ENCODE measurements at regions of chr20 and their contacts with region 1.

Region 1: GRCh38 chr20:40990542-40991120 is 38.0 kb upstream of the TOP1 start:
- DNase-seq: peak; percentile 95
- H3K4me3 ChIP-seq: no peak overlapping the region
- H3K4me3 Mint-ChIP-seq: no peak overlapping the region
- H3K27ac Mint-ChIP-seq: peak overlapping the region; percentile 62
- H3K4me1 ChIP-seq: peaks cover 12% of the 10 kb centered on the region
- H3K4me1 Mint-ChIP-seq: peaks cover 17% of the 10 kb centered on the region
- H3K27me3 ChIP-seq: no peaks in the 10 kb centered on the region
- H3K27me3 Mint-ChIP-seq: no peaks in the 10 kb centered on the region
- CTCF ChIP-seq: peak; percentile 96 to 99

Region 2: DNA sequence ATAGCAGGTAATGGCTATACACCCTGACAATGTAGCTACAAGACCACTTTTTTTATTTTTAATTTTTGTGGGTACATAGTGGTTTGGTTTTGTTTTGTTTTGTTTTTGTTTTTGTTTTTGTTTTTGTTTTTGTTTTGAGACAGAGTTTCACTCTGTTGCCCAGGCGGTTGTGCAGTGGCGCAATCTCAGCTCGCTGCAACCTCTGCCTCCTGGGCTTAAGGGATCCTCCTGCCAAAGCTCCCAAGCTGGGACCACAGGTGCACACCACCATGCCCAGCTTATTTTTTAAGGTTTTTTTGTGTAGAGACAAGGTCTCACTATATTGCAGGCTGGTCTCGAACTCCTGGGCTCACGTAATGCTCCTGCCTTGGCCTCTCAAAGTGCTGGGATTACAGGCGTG is 18.5 kb before region 1 on chr20:
- CTCF ChIA-PET with region 1: interaction called, 13 read pairs
- POLR2A ChIA-PET with region 1: no interaction called
- intact Hi-C with region 1: loop called (anchors 1 kb)
- DNase-seq: no peak
- H3K4me3 ChIP-seq: no peak overlapping the region
- H3K4me3 Mint-ChIP-seq: no peak overlapping the region
- H3K27ac Mint-ChIP-seq: no peak overlapping the region
- H3K4me1 ChIP-seq: peaks cover 4% of the 10 kb centered on the region; the same call in 1 of the 2 replicates
- H3K4me1 Mint-ChIP-seq: peaks cover 9% of the 10 kb centered on the region
- H3K27me3 ChIP-seq: no peaks in the 10 kb centered on the region
- H3K27me3 Mint-ChIP-seq: peaks cover 3% of the 10 kb centered on the region
- CTCF ChIP-seq: no peak

Region 3: GRCh38 chr20:41017390-41018042 is 26.9 kb after region 1 on chr20:
- CTCF ChIA-PET with region 1: interaction called, 51 read pairs
- POLR2A ChIA-PET with region 1: interaction called, 7 read pairs
- intact Hi-C with region 1: loop called (anchors 1 kb)
- DNase-seq: peak; percentile 91 to 93
- H3K4me3 ChIP-seq: no peak overlapping the region
- H3K4me3 Mint-ChIP-seq: peak overlapping the region; percentile 49
- H3K27ac Mint-ChIP-seq: peak overlapping the region; percentile 46
- H3K4me1 ChIP-seq: peaks cover 32% of the 10 kb centered on the region
- H3K4me1 Mint-ChIP-seq: peaks cover 54% of the 10 kb centered on the region
- H3K27me3 ChIP-seq: no peaks in the 10 kb centered on the region
- H3K27me3 Mint-ChIP-seq: no peaks in the 10 kb centered on the region
- CTCF ChIP-seq: peak; percentile 40 to 45

Region 4: GRCh38 chr20:41038878-41039404 is 48.3 kb after region 1 on chr20:
- CTCF ChIA-PET with region 1: interaction called, 16 read pairs
- POLR2A ChIA-PET with region 1: interaction called, 4 read pairs
- intact Hi-C with region 1: no loop called
- DNase-seq: no peak
- H3K4me3 ChIP-seq: no peak overlapping the region
- H3K4me3 Mint-ChIP-seq: no peak overlapping the region
- H3K27ac Mint-ChIP-seq: no peak overlapping the region
- H3K4me1 ChIP-seq: peaks cover 51% of the 10 kb centered on the region
- H3K4me1 Mint-ChIP-seq: peaks cover 30% of the 10 kb centered on the region
- H3K27me3 ChIP-seq: no peaks in the 10 kb centered on the region
- H3K27me3 Mint-ChIP-seq: no peaks in the 10 kb centered on the region
- CTCF ChIP-seq: no peak

Region 5: GRCh38 chr20:41064377-41064776 is 73.7 kb after region 1 on chr20:
- CTCF ChIA-PET with region 1: interaction called, 10 read pairs
- POLR2A ChIA-PET with region 1: interaction called, 3 read pairs
- intact Hi-C with region 1: no loop called
- DNase-seq: no peak
- H3K4me3 ChIP-seq: no peak overlapping the region
- H3K4me3 Mint-ChIP-seq: no peak overlapping the region
- H3K27ac Mint-ChIP-seq: no peak overlapping the region
- H3K4me1 ChIP-seq: peaks cover 12% of the 10 kb centered on the region; the same call in 1 of the 2 replicates
- H3K4me1 Mint-ChIP-seq: peaks cover 14% of the 10 kb centered on the region
- H3K27me3 ChIP-seq: no peaks in the 10 kb centered on the region
- H3K27me3 Mint-ChIP-seq: no peaks in the 10 kb centered on the region
- CTCF ChIP-seq: no peak

Region 6: DNA sequence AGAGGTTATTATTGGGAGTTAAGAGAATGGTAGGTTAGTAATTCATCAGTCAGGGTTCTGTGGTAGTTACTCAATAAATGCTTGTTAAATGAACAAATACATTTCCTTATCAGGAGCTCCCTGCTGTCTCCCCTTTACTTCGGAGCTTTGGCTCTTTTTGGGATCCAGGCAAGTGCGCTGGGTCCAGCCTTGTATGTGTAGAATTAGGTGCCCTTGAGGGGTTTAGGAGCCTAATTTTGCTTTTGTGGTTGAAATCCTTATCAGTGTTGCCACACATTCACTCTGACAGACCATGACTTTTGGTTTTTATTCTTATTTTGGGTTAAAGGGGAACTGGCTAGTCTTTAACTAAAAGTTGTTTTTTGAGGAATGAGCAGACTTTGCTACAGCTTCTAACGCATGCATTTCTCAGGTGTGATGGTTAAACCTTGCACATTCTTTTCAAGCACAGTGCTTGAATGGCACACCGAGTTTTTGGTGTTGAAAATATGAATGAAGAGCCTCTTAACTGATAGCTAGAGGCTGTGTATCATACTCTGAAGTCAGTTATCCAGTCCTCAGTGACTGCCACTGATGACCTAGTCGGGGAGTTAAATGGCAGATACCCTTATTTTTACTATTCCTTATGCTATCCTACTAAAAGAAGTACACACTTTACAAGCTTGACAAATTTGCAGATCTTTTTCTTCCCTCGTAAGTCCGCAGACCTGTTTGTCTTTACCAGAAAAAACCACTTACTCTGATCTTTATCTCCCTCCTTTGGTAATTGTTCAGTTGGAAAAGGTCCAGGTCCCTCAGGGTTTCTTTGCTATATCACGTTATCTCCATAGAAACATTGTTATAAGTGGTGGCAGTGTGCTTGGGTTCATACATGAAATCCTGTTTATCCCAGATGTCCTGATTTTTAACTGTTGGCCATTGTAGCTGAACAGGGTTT is 96.0 kb after region 1 on chr20:
- CTCF ChIA-PET with region 1: interaction called, 24 read pairs
- POLR2A ChIA-PET with region 1: no interaction called
- intact Hi-C with region 1: no loop called
- DNase-seq: no peak
- H3K4me3 ChIP-seq: no peak overlapping the region
- H3K4me3 Mint-ChIP-seq: no peak overlapping the region
- H3K27ac Mint-ChIP-seq: no peak overlapping the region
- H3K4me1 ChIP-seq: no peaks in the 10 kb centered on the region
- H3K4me1 Mint-ChIP-seq: peaks cover 7% of the 10 kb centered on the region
- H3K27me3 ChIP-seq: no peaks in the 10 kb centered on the region
- H3K27me3 Mint-ChIP-seq: no peaks in the 10 kb centered on the region
- CTCF ChIP-seq: no peak

Region 7: DNA sequence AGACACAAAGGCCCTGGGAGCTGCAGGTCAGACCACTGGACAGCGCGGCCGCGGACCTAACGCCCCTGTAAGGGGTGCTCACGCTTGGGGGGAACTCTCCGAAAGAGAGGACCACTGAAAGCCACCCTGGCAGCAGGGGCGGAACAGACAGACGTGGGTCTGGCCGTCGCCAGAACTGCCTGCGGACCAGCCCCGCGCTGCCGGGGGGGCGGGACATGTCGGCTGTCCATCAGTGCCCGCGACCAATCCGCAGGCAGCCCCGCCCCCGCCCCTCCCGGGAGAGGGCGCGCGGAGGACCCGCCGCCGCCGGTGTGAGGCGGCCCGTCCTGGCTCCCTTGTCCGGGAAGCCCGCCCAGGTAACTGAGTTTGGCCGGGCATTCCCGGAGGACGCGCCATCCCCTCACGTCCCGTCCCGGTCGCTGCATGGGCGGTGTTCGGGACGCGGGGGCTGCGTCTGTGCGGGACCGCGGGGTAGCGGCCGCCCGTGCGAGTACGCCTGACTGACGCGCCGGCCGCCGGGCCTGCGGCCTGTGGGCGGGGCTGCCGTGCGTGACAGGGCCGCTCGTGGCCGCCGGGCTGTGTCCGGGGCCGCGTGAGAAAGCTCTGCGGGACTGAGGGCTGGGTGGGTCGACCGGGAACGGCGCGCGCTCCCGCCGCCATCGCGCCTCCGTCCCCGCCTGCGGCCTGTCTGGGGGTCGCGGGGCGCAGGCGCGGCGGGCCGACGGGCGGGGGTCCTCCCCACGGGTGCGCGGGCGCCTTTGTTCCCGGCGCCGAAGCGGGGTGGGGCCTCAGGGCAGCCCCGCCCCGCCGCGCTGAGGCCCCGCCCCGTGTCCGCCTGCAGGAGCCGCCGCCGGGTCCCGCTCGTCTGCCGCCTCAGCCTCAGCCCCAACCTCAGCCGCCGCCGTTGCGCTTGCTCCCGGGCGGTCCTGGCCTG is 146.3 kb after region 1 on chr20 and contains the start of gene PLCG1:
- CTCF ChIA-PET with region 1: interaction called, 25 read pairs
- POLR2A ChIA-PET with region 1: no interaction called
- intact Hi-C with region 1: no loop called
- DNase-seq: peak; percentile 93 to 99
- H3K4me3 ChIP-seq: peak within 1 kb of the TSS; percentile 96
- H3K4me3 Mint-ChIP-seq: peak within 1 kb of the TSS; percentile 83
- H3K27ac Mint-ChIP-seq: peak within 1 kb of the TSS; percentile 82
- H3K4me1 ChIP-seq: peaks cover 17% of the 10 kb centered on the region
- H3K4me1 Mint-ChIP-seq: peaks cover 21% of the 10 kb centered on the region
- H3K27me3 ChIP-seq: no peaks in the 10 kb centered on the region
- H3K27me3 Mint-ChIP-seq: no peaks in the 10 kb centered on the region
- CTCF ChIP-seq: no peak
- total RNA-seq, gene PLCG1: 196 and 205 TPM in 2 replicates